Lower leg skin (tissue), 4 donors: ENCODE measurements at regions of chr2 and their contacts with region 1.

Region 1: GRCh38 chr2:219358170-219359075 is 25.9 kb upstream of the RESP18 start:
- DNase-seq: no peak
- H3K4me3 ChIP-seq: no peak overlapping the region
- CTCF ChIP-seq: no peak
- POLR2A ChIP-seq: no peak

Region 2: DNA sequence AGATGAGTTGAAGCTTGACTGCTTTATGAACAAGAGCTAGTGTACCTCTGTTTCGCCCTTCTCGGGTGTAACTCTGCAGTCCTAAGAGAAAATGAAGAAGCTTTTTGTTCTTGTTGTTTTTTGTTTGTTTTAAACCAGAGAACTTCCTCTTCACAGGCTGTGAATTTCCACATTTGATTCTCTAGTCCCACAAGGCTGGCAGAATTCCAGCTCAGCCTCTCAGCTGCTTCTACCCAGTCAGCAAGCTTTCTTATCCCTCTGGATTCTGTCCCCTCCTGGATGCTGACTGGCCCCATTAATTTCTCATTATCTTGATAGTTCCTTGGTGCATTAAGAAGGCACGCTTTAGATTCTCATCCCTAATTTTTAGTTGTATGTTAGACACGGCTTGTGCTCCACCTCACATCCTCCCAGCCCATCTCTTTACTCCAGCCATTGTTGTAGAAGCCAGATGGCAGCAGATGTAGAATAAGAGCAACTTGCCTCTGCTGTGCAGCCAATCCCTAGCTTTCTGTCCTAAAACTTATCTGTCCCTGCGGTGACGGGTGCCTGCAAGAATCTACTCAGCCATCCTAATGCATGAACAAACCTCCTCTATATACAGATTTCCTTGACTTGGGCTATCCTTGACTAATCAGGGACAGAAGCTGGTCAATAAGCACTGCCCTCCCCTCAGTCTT is 13.5 kb before region 1 on chr2:
- intact Hi-C with region 1: no loop called
- DNase-seq: peak; percentile 54 to 86
- H3K4me3 ChIP-seq: no peak overlapping the region
- CTCF ChIP-seq: no peak
- POLR2A ChIP-seq: no peak

Region 3: GRCh38 chr2:219983836-219984235 is 625.4 kb after region 1 on chr2:
- intact Hi-C with region 1: loop called (anchors 5 kb)
- DNase-seq: no peak
- H3K4me3 ChIP-seq: no peak overlapping the region
- CTCF ChIP-seq: no peak
- POLR2A ChIP-seq: no peak

Region 4: GRCh38 chr2:220064111-220065030 is 705.9 kb after region 1 on chr2:
- intact Hi-C with region 1: no loop called
- DNase-seq: no peak
- H3K4me3 ChIP-seq: no peak overlapping the region
- CTCF ChIP-seq: no peak
- POLR2A ChIP-seq: no peak